ENCODE measurements at regions of chr4 and their contacts with region 1.

Region 1: GRCh38 chr4:41644288-41644914 is 104.1 kb downstream of the PHOX2B start:
- DNase-seq: peak; percentile 77 to 88
- ATAC-seq: peak; percentile 87 to 98 (median 92)
- H3K4me3 ChIP-seq: peak overlapping the region; percentile 42
- H3K27ac ChIP-seq: peak overlapping the region; percentile 27
- H3K4me1 ChIP-seq: no peaks in the 10 kb centered on the region
- H3K27me3 ChIP-seq: no peaks in the 10 kb centered on the region
- CTCF ChIP-seq: peak; percentile 86

Region 2: DNA sequence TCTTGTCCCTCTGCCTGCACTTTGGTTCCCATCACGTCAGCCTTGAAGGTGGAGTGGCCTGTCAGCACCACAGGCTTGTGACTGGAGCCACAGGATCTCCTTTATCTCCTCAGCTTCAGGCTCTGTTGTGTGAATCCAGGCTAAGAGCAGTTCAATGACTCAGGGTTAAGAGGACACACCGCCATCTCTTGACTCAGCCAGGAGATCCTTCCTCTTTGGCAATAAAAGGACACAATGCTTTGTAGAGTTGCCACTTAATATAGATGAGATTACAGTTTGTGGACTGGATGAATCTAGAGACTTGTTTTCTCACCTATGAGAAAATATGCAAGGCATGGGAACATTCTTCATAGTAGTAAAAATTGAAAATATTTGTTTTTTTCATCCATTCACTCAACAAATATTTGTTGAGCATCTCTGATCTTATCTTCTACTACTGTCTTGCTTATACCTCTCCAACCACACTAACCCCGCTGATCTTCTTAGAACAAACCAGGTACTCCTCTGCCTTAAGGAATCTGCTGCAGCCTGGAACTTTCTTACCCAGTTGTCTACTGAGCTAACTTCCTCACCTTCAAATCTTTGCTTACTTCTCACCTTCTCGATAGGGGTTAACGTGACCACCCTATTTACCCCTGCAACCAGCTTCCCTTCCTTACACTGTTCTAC is 325.4 kb before region 1 on chr4:
- intact Hi-C with region 1: no loop called
- DNase-seq: no peak
- ATAC-seq: peak in 1 of 4 donors; percentile 58
- H3K4me3 ChIP-seq: no peak overlapping the region
- H3K27ac ChIP-seq: no peak overlapping the region
- H3K4me1 ChIP-seq: no peaks in the 10 kb centered on the region
- H3K27me3 ChIP-seq: no peaks in the 10 kb centered on the region
- CTCF ChIP-seq: no peak

Region 3: DNA sequence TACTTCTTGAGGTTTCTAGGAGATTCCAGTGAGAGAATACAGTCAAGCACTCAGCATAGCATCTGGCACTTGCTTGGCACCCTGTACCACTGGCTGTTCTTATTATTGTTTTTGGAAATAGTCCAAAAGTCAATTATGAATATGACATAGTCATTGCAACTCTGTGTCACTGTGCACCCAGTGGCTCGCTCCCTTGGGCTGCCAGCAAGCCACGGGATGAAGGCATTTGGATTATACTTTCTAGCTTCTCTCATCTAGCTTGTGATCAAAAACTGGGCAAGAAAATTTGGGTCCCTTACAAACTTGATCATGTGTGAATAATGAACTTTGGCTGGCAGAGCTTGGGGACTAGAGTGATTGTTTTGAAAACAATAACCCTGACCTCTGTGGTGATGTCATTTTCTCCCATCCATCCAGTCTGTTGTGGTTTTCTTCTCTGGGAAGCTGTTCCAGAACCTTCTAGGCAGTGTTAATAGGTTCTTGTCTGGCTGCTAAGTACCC is 139.2 kb before region 1 on chr4:
- intact Hi-C with region 1: no loop called
- DNase-seq: peak; percentile 24 to 57
- ATAC-seq: peak; percentile 81 to 91 (median 86)
- H3K4me3 ChIP-seq: no peak overlapping the region
- H3K27ac ChIP-seq: no peak overlapping the region
- H3K4me1 ChIP-seq: peaks cover 9% of the 10 kb centered on the region
- H3K27me3 ChIP-seq: no peaks in the 10 kb centered on the region
- CTCF ChIP-seq: no peak

Region 4: DNA sequence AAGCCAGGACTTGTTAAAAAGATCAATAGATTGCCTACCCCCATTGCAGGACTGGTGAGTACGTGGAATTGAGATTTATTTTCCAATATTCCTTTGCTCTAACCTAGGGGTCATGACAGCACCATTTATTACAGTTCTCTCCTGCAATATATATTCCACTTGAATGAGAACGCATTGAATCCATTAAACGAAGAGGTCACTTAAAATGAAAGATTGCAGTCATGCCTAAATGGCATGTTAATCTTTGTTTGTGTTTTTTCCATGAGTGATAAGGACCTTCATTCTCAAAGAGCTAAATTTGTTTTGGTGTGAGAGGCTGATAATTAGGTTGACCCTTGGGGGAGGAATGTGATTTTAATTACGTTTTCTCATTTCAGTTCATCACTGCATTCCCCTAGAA is 120.0 kb before region 1 on chr4:
- intact Hi-C with region 1: loop called in 1 of 2 experiments (anchors 5 kb)
- DNase-seq: no peak
- ATAC-seq: no peak
- H3K4me3 ChIP-seq: no peak overlapping the region
- H3K27ac ChIP-seq: no peak overlapping the region
- H3K4me1 ChIP-seq: peaks cover 19% of the 10 kb centered on the region
- H3K27me3 ChIP-seq: no peaks in the 10 kb centered on the region
- CTCF ChIP-seq: no peak

Region 5: DNA sequence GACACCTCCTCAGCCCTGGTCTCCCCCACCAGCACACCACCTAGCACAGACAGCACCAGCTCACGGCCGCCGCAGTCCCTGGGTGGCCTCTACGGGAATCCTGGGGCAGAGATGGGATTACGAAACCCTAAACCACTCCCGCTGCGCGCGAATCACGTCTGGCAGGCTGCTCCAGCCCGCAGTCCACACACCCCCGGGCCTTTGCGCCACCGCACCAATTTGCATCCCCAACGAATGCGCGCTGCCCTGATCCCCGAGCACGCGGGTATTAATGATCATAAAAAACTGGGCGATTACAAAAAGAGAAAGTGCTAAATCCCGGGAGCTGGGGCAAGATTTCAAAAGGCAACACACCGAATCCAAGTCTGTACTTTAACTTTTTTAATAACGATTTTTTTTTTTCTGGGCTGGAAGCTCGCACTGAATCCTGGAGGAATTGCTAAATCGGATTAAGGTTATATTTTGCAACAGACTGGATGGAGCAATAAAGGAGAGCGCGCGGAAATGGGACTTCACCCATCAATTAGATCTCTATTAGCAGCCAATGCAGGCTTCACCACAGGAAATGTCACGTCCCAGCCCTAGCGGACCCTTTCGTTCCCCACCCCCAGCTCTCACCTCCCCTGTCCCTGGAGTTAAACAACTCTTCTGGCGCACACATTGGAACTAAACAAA is 221.0 kb after region 1 on chr4:
- intact Hi-C with region 1: no loop called
- DNase-seq: peak; percentile 48 to 70
- ATAC-seq: peak in 3 of 4 donors; percentile 44 to 66 (median 54)
- H3K4me3 ChIP-seq: no peak overlapping the region
- H3K27ac ChIP-seq: no peak overlapping the region
- H3K4me1 ChIP-seq: no peaks in the 10 kb centered on the region
- H3K27me3 ChIP-seq: peaks cover 8 to 68% (median 27%) of the 10 kb centered on the region in 3 donors
- CTCF ChIP-seq: no peak

Measured in psoas muscle (tissue), 8 donors.